HepG2 (cell line): ENCODE measurements at regions of chr19 and their contacts with region 1.

Region 1: DNA sequence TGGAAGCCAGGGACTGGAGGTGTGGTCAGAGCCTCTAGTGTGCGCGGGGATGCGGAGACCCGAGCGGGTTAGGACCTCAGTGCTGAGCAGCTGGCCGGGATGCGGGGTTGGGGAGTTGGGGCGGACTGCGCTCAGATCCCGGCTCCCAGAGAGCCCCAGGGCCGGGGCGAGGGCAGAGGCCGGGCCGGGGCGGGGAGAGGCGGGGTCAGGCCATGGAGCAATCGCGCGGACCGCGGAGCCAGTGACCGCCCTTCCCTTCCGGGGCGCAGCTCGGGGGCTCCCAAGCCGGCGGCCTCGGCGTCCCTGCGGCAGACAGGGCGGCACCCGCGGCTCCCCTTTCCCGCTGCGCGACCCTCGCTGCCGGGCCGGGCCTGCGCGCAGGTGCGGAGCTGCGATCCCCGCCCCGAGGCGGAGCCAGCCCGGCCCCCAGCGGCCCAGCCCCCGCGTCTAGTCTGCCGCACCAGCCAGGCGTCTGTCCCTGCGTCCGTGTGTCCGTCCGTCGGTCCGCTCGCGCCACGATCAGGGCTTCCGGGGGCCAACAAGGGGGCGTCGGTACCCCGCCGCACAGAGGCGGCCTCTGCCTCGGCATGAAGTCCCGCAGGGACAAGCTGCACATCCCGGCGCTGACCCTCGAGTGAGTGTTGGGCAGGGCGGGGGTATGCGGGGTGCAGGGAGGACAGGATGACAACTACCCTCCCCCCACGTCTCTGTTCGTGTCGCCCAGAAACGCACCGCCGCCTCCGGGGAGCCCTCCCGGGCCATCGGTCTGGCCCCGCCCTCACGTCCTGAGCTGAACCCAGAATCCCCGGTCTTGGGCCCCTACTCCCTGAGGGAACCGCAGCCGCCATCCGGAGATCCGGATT is 12.4 kb downstream of the MAST3 start:
- DNase-seq: peak; percentile 29
- ATAC-seq: peak; percentile 87
- H3K4me3 ChIP-seq: peak overlapping the region; percentile 78 to 92 (median 88)
- H3K27ac ChIP-seq: peak overlapping the region; percentile 94
- H3K4me1 ChIP-seq: peaks cover 42% of the 10 kb centered on the region
- H3K27me3 ChIP-seq: no peaks in the 10 kb centered on the region
- CTCF ChIP-seq: no peak
- EP300 ChIP-seq: no peak
- POLR2A ChIP-seq: peak; percentile 49 to 77; a peak in 2 of 4 replicates
- RAD21 ChIP-seq: peak; percentile 45; the same call in 1 of the 2 replicates

Region 2: DNA sequence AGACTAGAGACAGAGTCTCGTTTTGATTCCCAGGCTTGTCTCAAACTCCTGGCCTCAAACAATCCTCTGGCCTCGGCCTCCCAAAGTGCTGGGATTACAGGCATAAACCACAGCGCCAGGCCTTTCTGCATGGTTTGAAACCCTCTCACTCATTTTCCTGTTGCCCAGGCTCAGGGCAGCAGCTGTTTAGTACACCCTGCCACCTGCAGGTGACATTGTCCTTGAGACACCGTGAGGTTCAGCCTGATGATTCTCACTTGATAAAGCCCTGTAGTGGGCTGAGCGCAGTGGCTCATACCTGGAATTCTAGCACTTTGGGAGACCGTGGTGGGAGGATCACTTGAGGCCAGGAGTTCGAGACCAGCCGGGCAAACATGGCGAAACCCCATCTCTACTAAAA is 35.8 kb before region 1 on chr19:
- CTCF ChIA-PET with region 1: no interaction called
- POLR2A ChIA-PET with region 1: no interaction called
- in situ Hi-C with region 1: no loop called
- intact Hi-C with region 1: no loop called
- DNase-seq: peak; percentile 33
- ATAC-seq: peak; percentile 84
- H3K4me3 ChIP-seq: no peak overlapping the region
- H3K27ac ChIP-seq: no peak overlapping the region
- H3K4me1 ChIP-seq: no peaks in the 10 kb centered on the region
- H3K27me3 ChIP-seq: peaks cover 0 to 25% of the 10 kb centered on the region in 2 experiments; a peak in 3 of 5 replicates
- CTCF ChIP-seq: peak; percentile 61
- EP300 ChIP-seq: no peak
- POLR2A ChIP-seq: no peak
- RAD21 ChIP-seq: no peak

Region 3: DNA sequence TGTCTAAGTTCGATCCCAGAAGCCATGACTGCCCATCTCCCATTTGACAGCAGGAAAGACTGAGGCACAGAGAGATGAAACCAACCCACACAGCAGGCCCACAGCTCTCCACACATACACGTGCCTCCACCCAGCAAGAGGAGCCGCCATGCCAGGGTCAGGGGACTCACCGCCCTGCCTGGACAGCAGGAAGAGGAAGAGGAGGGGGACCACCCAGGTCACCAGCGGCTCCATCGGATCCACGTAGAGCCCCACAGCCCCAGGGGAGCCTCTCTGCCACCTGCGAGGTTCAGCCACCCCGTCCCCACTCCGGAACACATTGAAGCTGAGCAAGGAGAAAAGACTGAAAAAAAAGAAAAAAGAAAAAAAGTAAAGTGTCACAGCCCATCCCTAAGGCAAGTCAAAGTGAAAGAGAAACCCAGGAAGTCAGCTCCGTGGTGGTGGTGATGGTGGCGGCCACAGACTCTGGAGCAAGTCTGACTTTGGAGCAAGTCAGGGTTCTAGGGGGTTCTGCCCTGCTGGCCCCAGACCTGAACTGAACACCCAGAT is 23.3 kb before region 1 on chr19 and contains the start of gene IL12RB1:
- CTCF ChIA-PET with region 1: no interaction called
- POLR2A ChIA-PET with region 1: interaction called, 15 read pairs
- in situ Hi-C with region 1: no loop called
- intact Hi-C with region 1: no loop called
- DNase-seq: no peak
- ATAC-seq: peak; percentile 57; the same call in 2 of the 3 replicates
- H3K4me3 ChIP-seq: peak within 1 kb of the TSS; percentile 62 to 78 (median 77)
- H3K27ac ChIP-seq: no peak within 1 kb of the TSS
- H3K4me1 ChIP-seq: peaks cover 44% of the 10 kb centered on the region
- H3K27me3 ChIP-seq: no peaks in the 10 kb centered on the region; a peak in 2 of 5 replicates
- CTCF ChIP-seq: no peak
- EP300 ChIP-seq: no peak
- POLR2A ChIP-seq: no peak
- RAD21 ChIP-seq: no peak
- total RNA-seq, gene IL12RB1: 0.04 TPM in 1 of 2 replicates, not detected in the other

Region 4: DNA sequence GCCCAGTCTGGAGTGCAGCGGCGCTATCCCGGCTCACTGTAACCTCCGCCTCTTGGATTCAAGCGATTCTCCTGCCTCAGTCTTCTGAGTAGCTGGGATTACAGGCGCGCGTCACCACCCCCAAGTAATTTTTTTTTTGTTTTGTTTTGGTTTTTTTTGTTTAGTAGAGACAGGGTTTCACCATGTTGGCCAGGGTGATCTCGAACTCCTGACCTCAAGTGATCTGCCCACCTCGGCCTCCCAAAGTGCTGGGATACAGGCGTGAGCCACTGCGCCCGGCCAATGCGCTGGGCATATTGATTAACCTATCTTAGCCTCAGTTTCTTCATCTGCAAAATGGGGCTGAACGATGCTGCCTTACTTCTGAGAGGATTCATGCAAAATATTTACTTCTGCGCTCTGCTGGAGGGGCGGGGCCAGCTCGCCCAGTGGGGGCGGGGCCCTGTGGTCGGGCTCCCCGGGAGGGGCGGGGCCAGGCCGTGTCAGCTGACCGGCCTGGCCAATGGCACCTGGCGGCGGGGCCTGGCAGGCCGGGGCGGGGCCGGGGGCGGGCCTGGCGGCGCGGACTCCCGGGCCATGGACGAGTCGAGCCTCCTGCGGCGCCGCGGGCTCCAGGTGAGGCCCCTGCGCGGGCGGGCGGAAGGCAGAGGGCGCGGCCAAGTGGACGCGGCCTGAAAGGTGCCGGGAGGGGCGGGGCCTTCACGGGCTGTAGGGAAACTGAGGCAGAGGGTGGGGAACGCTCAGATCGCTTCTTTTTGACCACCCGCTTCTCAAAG is 12.6 kb before region 1 on chr19 and contains the start of gene MAST3:
- CTCF ChIA-PET with region 1: no interaction called
- POLR2A ChIA-PET with region 1: interaction called, 16 read pairs
- in situ Hi-C with region 1: no loop called
- intact Hi-C with region 1: no loop called
- DNase-seq: peak; percentile 70
- ATAC-seq: peak; percentile 92
- H3K4me3 ChIP-seq: peak within 1 kb of the TSS; percentile 45 to 74 (median 48)
- H3K27ac ChIP-seq: no peak within 1 kb of the TSS
- H3K4me1 ChIP-seq: peaks cover 59% of the 10 kb centered on the region
- H3K27me3 ChIP-seq: peaks cover 2 to 10% of the 10 kb centered on the region in 2 experiments; a peak in 3 of 5 replicates
- CTCF ChIP-seq: peak; percentile 34
- EP300 ChIP-seq: no peak
- POLR2A ChIP-seq: no peak
- RAD21 ChIP-seq: no peak
- total RNA-seq, gene MAST3: 4.1 and 4.5 TPM in 2 replicates

Region 5: DNA sequence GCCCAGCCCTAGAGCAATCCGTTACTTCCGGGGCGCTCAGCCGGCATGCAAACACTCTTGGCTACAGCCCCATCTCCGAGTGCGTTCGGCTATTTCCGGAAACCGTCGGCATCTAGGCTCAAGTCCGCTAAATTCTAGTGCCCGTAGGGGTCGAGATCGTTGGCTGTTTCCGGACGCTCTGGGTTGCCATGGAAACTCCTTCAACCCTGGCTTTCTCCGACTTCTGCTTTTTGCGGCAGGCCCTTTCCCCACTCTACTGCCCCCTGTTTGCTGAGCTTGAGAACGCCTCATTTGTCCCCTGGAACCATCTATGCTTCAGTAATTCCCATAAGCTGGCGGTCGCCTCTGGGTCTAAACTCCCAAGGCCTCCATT is 42.5 kb after region 1 on chr19:
- CTCF ChIA-PET with region 1: interaction called, 3 read pairs
- POLR2A ChIA-PET with region 1: interaction called, 18 read pairs
- in situ Hi-C with region 1: loop called (anchors 5 kb)
- intact Hi-C with region 1: loop called (anchors 1 kb)
- DNase-seq: peak; percentile 98
- ATAC-seq: peak; percentile 75
- H3K4me3 ChIP-seq: peak overlapping the region; percentile 47 to 98 (median 66); a peak in 5 of 6 replicates
- H3K27ac ChIP-seq: peak overlapping the region; percentile 94
- H3K4me1 ChIP-seq: peaks cover 53% of the 10 kb centered on the region
- H3K27me3 ChIP-seq: no peaks in the 10 kb centered on the region; a peak in 1 of 5 replicates
- CTCF ChIP-seq: peak; percentile 78
- EP300 ChIP-seq: no peak; a peak in 1 of 4 replicates
- POLR2A ChIP-seq: no peak
- RAD21 ChIP-seq: peak; percentile 66

Region 6: DNA sequence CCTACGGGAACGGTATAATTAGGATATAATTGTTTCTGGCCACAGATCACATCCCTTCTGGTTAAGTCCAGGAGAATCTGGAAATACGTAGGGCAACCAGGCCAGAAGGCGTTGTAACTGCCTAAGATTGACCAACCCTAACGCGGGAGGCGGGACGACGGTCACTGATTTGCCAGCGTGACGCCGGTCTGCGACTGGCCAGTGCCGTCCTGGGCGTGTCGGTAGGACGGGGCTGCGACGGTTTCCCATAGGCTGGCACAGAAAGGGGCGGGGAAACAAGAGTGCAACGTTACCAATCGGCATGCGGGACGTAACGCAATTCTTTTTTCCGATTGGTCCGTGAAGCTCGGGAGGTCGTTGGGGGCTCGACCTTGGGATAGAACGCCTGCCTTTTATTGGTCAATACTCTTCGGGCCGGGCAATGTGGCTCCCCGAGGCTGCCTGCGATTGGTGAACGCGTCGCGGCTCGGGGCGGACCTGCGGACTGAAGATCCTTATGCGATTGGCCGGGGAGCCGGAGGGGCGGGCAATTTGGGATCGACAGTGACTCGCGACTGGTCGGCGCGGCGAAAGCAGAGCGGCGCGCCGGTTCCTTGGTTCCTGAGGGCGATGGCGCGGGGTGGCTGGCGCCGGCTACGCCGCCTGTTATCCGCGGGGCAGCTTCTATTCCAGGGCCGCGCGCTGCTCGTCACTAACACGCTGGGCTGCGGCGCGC is 82.9 kb after region 1 on chr19 and contains the start of gene MPV17L2:
- CTCF ChIA-PET with region 1: no interaction called
- POLR2A ChIA-PET with region 1: interaction called, 15 read pairs
- in situ Hi-C with region 1: no loop called
- intact Hi-C with region 1: no loop called
- DNase-seq: peak; percentile 99
- ATAC-seq: peak; percentile 93
- H3K4me3 ChIP-seq: peak within 1 kb of the TSS; percentile 70 to 84 (median 83)
- H3K27ac ChIP-seq: peak within 1 kb of the TSS; percentile 73
- H3K4me1 ChIP-seq: peaks cover 30% of the 10 kb centered on the region
- H3K27me3 ChIP-seq: no peaks in the 10 kb centered on the region; a peak in 1 of 5 replicates
- CTCF ChIP-seq: no peak; the same call in 1 of the 2 replicates
- EP300 ChIP-seq: no peak
- POLR2A ChIP-seq: peak; percentile 66 to 85
- RAD21 ChIP-seq: 0 out of 2 replicates have a peak, but pooled peaks have one; percentile 38
- total RNA-seq, gene MPV17L2: 13.0 and 16.7 TPM in 2 replicates